Lower leg skin (tissue), 4 donors: ENCODE measurements at regions of chr15 and their contacts with region 1.

Region 1: DNA sequence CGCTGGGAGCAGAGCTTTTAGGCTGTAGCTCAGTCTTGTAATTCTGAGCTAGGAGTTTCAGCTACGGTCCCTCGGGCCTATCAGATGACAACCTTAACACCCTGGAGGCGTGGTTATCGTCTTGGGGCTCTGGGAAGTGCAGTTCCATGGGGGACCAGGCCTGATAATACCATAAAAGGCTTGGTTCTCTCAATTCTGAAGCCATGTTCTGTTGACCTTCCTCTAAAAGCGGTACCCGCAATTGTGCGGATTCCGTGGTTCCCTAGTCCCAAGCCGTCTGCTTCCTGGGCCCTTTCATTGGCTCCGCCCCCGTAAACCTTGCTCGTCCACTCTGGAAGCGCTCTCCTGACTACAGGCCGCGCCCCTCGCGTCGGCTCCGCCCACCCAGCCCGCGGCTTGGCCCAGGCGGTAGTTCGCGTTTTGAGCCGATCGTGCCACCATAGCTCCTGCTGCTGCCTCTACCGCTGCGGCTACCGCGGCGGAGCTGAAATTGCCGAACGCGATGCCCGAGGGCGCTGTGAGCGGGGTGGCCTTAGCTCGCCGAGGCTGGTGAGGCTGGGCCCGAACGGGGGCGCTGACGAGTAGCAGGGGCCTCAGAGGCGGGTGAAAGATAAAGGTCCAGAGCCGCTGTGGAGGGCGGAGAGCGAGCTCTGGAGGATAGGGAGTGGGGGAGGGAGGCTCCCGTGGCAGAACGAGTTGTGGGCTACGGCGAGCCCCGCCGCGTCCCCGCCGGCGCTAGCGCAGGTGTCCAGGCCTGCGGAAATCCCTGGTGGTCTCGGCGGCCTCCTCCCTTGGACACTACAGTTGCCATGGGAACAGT is at the start of gene MAPKBP1:
- DNase-seq: peak; percentile 98 to 99
- H3K4me3 ChIP-seq: peak within 1 kb of the TSS; percentile 78
- CTCF ChIP-seq: no peak
- POLR2A ChIP-seq: no peak
- total RNA-seq, gene MAPKBP1: 35.3 to 64.4 (median 47.7) TPM

Region 2: DNA sequence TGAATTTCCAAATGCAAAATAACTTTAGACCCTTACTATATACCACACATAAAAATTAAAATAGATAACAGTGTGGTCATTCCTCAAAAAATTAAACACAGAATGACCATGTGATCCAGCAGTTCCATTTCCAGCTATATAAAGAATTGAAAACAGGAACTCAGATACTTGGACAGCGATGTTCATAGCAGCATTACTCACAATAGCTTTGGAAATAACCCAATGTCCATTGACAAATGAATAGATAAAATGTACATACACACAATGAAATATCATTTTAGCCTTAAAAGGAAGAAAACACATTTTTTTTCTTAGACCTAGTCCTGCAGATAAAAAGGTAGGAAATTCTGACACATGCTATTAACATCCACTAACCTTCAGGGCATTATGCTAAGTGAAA is 1052.6 kb before region 1 on chr15:
- intact Hi-C with region 1: no loop called
- DNase-seq: no peak
- H3K4me3 ChIP-seq: no peak overlapping the region
- CTCF ChIP-seq: no peak
- POLR2A ChIP-seq: no peak

Region 3: DNA sequence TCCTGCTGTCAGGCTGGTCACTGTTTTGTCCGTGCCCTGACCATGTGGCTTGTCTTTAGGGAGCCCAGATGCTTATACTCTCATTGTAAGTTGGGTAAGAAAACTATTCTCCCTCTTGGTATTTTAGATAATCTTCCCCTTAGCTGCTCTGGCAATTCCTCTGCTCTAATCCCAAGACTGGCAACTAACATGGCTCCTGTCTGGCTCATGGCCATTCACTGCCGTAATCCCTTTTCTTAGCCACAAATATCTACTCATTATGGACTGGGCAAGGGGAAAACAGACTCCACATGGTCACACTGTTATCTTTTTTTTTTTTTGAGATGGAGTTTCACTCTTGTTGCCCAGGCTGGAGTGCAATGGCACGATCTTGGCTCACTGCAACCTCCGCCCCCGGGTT is 176.5 kb before region 1 on chr15:
- intact Hi-C with region 1: no loop called
- DNase-seq: no peak
- H3K4me3 ChIP-seq: no peak overlapping the region
- CTCF ChIP-seq: no peak
- POLR2A ChIP-seq: no peak

Region 4: DNA sequence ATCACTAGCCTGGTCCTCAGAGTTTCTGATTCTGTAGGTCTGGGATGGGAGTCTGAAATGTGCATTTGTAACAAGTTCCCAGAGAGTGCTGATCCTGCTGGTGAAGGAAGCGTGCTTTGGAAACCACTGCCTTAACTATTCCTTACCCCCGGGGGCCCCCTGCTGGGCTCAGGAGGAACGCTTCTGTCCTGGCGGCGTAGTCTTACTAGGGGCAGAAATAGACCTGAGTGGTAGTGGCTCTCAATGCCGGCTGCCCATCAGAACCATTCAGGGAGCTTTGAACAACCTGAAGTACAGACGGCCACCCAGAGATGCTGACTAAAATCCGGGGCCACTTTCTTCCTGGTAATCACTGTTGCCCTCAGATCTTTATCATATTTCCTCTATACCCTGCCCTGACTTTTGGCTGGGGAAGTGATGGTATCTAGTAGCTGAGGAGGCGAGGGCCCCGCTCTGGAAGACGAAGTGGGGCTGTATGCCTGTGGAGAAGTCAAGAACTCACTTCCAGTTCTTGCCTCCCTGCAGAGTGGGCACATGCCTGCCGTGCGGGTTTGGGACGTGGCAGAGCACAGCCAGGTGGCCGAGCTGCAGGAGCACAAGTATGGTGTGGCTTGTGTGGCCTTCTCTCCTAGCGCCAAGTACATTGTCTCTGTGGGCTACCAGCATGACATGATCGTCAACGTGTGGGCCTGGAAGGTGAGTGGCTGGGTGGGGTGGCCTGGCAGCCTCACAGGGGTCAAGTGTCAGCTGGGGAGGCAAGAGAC is 37.3 kb after region 1 on chr15:
- intact Hi-C with region 1: loop called (anchors 5 kb)
- DNase-seq: peak; percentile 84 to 97
- H3K4me3 ChIP-seq: no peak overlapping the region
- CTCF ChIP-seq: peak in 1 of 3 donors; percentile 67
- POLR2A ChIP-seq: no peak

Region 5: DNA sequence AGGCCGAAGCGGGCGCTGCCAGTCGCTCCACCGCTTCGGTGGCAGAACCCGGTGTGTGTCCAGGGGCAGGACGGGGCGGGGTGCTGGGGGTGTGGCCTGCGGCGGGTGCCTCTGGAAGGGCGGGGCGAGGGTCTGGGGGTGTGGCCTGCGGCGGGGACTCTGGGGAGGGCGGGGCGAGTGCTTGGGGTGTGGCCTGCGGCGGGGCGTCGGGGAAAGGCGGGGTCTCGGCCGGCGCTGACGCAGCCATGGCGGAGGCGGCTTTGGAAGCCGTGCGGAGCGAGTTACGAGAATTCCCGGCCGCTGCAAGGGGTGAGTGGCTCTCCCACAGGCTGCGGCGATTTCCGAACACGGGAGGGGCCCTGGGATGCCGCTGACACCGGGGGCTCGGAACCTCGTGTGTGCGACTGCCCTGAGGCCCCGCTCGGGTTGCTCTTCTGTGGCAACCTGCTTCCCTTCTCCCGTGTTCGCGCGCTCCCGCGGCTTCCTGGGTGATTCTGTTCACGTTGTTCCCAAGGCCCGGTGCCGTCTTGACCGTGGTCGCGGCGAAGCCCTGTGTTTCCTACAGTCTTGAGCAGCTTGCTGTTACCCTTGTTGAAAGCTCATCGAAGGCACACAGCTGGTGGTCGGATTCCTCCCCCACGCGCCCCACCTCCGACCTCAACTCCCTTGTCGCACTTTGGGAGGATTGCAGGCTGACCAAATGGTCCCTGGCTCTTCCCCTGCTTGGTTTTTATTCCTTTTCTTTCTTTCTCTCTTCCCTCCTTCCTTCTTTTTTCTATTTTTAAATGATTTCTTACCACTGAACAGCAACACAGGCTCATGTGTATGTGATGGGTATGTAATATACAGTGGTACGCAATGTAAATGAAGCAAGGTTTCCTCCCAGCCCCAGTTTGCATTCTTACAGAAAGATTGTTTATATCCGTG is 53.9 kb after region 1 on chr15 and contains the start of gene JMJD7:
- intact Hi-C with region 1: no loop called
- DNase-seq: peak; percentile 89 to 98
- H3K4me3 ChIP-seq: peak within 1 kb of the TSS; percentile 59
- CTCF ChIP-seq: no peak
- POLR2A ChIP-seq: no peak
- total RNA-seq, gene JMJD7: 40.7 to 61.6 (median 47.1) TPM